Left ventricle myocardium inferior (tissue), 1 donor: ENCODE measurements at regions of chr21 and their contacts with region 1.

Region 1: DNA sequence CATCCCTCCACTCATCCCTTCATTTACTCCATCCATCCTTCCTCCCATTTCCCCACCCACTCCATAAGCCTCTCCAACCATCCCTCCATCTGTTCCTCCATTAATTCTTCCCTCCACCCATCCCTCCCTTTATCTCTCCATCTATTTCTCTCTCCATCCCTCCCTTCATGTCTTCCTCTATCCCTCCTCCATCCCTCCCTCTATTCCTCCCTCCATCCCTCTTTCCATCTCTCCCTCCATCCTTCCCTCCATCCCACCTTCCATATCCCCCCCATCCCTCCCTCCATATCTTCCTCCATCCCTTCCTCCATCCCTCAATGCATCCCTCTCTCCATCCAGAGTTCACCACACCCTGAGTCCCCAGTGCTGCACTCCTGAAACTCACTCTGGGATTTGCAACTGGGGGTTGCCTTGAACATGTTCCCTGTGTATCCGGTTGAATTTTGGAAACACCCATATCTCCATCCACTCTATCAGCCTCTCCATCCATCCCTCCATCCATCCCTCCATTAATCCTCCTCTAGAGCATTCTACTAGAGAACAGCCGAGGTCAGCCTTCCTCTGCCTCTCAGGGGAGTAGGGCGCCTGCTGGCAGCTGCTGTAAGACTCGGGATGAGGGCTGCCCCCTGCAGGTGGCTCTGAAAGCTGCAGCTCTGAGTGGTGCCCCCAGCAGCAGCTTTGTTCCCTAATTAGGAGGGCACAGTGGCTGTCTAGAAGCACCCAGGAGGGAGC is 39.4 kb downstream of the ABCG1 start:
- DNase-seq: peak; percentile 68
- H3K4me3 ChIP-seq: no peak overlapping the region
- H3K27ac ChIP-seq: peak overlapping the region; percentile 54
- H3K4me1 ChIP-seq: peaks cover 69% of the 10 kb centered on the region
- H3K27me3 ChIP-seq: no peaks in the 10 kb centered on the region
- CTCF ChIP-seq: peak; percentile 82

Region 2: DNA sequence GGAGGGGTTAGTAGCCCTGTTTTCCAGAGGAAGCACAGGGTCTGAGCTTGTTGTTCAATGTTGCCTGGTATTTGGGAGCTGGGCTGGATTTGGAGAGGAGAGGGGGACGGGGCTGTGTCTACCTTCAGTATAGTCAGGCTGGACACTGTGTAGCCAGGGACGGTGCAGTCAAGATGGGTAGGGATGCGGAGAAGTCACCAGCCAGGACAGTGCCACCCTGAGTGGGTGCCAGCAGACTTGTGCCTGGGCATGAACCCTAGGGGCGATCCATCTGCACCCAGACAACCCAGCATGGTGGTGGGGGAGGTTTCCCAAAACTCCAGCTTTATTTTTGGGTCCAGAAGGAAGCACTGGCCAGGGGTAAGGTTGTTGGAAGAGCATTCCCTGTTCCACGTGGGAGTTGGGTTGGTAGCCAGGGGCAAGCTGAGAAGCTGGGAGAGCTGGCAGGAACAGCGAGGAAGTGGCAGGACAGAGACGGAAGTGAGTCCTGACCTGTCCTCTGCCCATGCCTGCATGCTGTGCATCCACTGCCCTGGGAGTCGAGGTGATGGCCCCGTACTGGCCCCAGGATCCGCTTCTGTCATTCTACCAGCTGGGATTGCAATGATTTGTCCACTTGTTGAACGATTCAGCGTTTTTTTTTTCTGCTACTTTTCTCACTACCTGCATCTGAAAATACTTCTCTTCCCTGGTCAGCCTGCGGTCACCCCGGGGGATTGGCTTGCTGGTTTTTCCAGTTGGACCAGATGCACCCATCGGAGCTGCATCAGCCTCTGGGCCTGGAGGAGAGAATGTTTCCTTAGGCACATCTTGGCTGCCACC is 722.3 kb before region 1 on chr21:
- intact Hi-C with region 1: no loop called
- DNase-seq: no peak
- H3K4me3 ChIP-seq: no peak overlapping the region
- H3K27ac ChIP-seq: no peak overlapping the region
- H3K4me1 ChIP-seq: no peaks in the 10 kb centered on the region
- H3K27me3 ChIP-seq: peaks cover 71% of the 10 kb centered on the region
- CTCF ChIP-seq: no peak

Region 3: DNA sequence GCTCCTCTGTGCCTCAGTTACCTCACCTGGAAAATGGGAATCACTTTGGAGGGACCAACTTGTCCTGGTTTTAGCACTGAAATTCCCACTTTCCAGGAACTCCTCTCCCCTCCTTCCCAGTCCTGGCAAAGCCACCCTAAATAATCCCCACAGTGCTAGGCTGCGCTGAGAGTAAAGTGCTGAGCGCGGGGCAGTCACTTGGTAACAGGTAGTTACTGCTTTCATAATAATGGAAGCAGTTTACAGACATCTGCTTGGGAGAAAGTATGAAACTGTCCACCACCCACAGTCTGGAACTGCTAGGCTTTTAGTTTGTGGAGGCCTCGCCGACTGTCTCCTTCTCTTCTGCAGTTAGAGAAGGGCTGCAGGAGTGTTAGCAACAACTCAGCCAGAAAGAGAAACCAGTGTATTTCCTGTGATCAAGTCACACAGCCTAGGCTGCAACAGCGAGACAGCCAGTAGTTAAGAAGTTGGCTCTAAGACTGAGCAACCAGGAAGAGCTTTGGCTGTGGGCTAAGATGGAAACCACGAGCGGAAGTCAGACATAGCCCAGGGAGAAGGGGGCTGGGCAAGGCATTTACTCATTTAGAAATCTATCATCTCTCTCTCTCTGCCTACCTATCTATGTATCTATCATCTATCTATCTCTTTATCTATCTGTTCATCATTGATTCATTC is 70.2 kb before region 1 on chr21:
- intact Hi-C with region 1: loop called (anchors 10 kb)
- DNase-seq: no peak
- H3K4me3 ChIP-seq: no peak overlapping the region
- H3K27ac ChIP-seq: peak overlapping the region; percentile 63
- H3K4me1 ChIP-seq: peaks cover 12% of the 10 kb centered on the region
- H3K27me3 ChIP-seq: no peaks in the 10 kb centered on the region
- CTCF ChIP-seq: no peak

Region 4: GRCh38 chr21:42330380-42331359 is 72.4 kb after region 1 on chr21:
- intact Hi-C with region 1: no loop called
- DNase-seq: no peak
- H3K4me3 ChIP-seq: no peak overlapping the region
- H3K27ac ChIP-seq: no peak overlapping the region
- H3K4me1 ChIP-seq: no peaks in the 10 kb centered on the region
- H3K27me3 ChIP-seq: peaks cover 33% of the 10 kb centered on the region
- CTCF ChIP-seq: no peak